A673 (cell line): ENCODE measurements at regions of chr12 and their contacts with region 1.

Region 1: DNA sequence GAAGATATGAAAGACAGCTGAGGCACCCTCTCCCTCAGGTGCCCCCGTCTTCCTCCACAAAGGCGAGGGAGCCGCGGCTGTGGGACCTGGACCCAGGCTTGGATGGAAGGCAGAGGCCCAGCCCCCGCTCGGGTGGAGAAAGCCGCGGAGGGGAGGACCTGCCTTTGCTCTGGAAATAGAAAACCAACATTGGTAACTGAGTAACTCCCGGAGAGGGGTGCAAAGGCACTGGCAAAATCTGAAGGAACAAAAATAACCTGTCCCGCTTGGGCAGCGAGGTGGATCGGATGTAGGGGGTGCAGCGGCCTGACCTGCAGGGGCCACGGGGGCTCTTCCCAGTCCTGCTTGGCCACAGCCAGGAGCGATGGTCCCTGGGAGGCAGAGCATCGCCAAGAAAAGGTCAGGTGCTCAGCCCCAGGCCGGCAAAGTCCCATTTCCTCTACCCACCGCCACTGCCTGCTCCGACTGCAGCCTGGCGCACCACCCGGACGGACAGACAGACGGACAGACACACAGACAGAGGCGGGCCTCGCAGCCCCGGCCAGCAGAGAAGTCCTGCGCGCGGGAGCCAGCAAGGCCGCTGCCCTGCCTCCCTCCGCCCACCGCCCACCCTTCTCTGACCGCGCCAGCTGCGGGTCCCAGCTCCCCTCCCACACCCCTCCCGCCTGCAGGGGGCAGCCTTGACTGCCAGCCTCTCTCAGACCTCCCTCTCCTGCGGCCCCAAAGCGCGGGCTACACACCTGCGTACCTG is 21.4 kb upstream of the TMEM106C start:
- DNase-seq: peak; percentile 41
- H3K4me3 ChIP-seq: no peak overlapping the region
- H3K27ac ChIP-seq: no peak overlapping the region
- H3K4me1 ChIP-seq: no peaks in the 10 kb centered on the region
- H3K27me3 ChIP-seq: no peaks in the 10 kb centered on the region
- CTCF ChIP-seq: peak; percentile 63

Region 2: DNA sequence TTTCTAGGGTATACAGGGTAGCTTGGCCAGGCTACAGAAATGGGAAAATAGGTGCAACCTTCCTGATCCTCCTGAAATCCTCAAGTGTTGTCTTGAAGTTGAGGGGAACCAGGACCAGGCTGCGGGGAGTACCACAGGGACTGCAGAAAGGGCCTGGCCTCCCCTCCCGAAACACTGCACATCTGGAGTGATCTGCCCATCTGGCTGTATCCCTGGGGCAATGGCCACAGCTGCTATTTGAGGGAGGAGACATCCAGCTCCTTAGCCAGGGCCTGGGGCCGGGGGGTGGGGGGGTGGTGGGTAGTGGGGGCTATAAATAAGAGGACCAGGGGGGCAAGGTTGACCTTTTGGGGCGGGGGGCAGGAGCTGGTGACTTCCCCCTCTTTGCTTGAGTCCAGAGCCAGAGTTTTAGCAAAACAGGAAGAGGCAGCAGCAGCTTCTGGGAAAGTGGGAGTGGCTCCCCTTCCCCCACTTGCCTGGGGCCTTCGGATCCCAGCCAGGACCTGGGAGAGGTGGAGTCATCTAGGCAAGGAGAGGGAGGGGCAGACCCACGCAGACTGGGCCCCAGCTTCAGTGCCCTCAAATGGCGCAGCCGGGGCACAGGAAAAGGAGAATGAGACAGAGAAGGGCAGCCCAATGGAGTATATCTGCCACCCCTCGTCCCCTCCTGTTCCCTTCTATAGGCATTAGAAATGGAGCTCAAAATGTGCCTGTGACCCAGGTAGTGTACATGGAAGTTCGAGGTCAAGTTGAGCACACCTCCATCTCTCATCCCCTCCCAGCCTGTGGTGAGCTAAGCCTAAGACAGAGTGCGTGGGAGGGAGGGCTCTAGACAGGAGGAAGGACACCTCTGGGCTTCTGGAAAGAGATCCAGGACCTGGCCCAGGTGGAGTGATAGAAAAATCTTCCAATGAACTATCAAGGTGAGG is 113.2 kb before region 1 on chr12:
- CTCF ChIA-PET with region 1: interaction called, 15 read pairs
- POLR2A ChIA-PET with region 1: no interaction called
- intact Hi-C with region 1: no loop called
- DNase-seq: peak; percentile 51
- H3K4me3 ChIP-seq: no peak overlapping the region
- H3K27ac ChIP-seq: peak overlapping the region; percentile 28
- H3K4me1 ChIP-seq: peaks cover 10% of the 10 kb centered on the region
- H3K27me3 ChIP-seq: no peaks in the 10 kb centered on the region
- CTCF ChIP-seq: no peak